Natural killer cell (primary cell): ENCODE measurements at regions of chr10 and their contacts with region 1.

Region 1: DNA sequence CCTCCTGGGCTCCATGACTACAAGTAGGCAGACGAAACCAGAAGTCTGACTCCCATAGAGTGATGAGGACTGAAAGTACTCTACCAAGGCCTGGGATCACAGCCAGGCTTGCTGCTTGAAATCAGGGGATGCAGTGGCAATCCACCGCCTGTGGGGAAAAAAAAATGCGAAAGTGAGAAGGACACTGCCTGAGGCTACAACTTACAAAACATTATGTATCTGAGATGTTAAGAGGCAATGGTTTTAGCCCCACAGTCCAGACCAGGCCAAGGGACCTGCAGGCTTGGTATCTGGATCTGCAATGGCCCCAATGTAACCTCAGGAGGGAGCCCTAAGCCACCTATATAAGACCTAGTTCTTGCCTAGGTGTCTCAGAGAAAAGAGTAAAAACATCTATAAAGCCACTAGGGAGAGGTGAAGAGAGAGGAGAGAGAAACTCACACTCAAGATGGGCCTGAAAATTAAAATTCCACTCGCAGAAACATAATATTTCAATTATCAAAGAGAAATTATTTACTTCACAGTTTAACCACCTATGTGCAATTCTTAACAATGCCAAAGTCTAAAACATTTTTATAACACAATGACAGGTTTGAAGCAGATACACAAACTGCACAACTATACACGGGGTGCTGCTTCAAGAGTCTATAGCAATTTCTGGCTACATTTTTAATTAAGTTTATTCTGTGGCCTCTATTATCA is 13.9 kb downstream of the DNAJC1 start:
- DNase-seq: peak in 1 of 2 donors; percentile 64
- ATAC-seq: peak; percentile 68 to 86 (median 85)
- H3K4me3 ChIP-seq: no peak overlapping the region
- H3K4me3 Mint-ChIP-seq: no peak overlapping the region
- H3K27ac ChIP-seq: no peak overlapping the region
- H3K27ac Mint-ChIP-seq: peak overlapping the region; percentile 23 to 76
- H3K4me1 ChIP-seq: no peaks in the 10 kb centered on the region
- H3K4me1 Mint-ChIP-seq: peaks cover 31 to 40% of the 10 kb centered on the region in 2 donors
- H3K27me3 ChIP-seq: no peaks in the 10 kb centered on the region
- H3K27me3 Mint-ChIP-seq: no peaks in the 10 kb centered on the region
- CTCF ChIP-seq: peak; percentile 43

Region 2: DNA sequence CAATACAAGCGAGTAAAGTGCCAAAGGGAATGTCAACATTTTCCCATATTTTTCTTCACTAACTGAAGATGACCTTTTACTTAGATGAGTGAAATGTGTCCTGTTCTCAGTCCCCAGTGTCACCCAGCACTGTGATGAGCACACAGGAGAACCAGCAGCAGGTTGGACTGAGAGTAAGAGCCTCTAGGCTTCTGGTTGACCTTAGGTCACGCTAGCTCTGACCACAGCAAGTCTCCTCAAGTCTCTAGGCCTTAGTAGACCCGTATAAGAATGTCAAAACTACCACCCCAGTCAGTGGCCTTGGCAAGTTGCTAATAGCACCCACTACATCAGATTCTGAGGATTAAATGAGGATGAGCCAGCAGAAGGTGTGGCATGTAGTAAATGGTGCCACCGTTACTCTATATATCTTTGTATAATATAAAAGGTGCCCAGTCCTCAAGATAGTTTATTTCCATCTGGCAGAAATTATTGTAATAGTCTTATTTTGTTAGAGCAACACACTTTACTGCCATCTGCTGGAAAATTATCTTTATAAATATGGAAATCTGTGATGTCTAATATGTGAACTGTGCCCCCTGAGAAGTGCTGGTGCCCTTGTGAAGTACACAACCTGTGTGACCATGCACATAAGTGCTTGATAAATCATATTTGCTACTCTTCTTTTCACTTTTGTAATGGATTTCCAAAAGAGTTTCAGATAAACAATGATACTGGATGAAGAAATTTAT is 431.3 kb after region 1 on chr10:
- intact Hi-C with region 1: loop called (anchors 5 kb)
- DNase-seq: peak in 1 of 2 donors; percentile 57
- ATAC-seq: peak in 1 of 3 donors; percentile 26
- H3K4me3 ChIP-seq: no peak overlapping the region
- H3K4me3 Mint-ChIP-seq: no peak overlapping the region
- H3K27ac ChIP-seq: no peak overlapping the region
- H3K27ac Mint-ChIP-seq: no peak overlapping the region
- H3K4me1 ChIP-seq: no peaks in the 10 kb centered on the region
- H3K4me1 Mint-ChIP-seq: peaks cover 0 to 8% of the 10 kb centered on the region in 2 donors
- H3K27me3 ChIP-seq: no peaks in the 10 kb centered on the region
- H3K27me3 Mint-ChIP-seq: no peaks in the 10 kb centered on the region
- CTCF ChIP-seq: peak; percentile 36

Region 3: GRCh38 chr10:22550732-22551131 is 561.1 kb after region 1 on chr10:
- intact Hi-C with region 1: loop called (anchors 1 kb)
- DNase-seq: peak; percentile 68 to 81
- ATAC-seq: peak in 2 of 3 donors; percentile 77 to 78
- H3K4me3 ChIP-seq: no peak overlapping the region
- H3K4me3 Mint-ChIP-seq: no peak overlapping the region
- H3K27ac ChIP-seq: no peak overlapping the region
- H3K27ac Mint-ChIP-seq: peak overlapping the region; percentile 73 to 87
- H3K4me1 ChIP-seq: peaks cover 6% of the 10 kb centered on the region
- H3K4me1 Mint-ChIP-seq: peaks cover 32 to 43% of the 10 kb centered on the region in 2 donors
- H3K27me3 ChIP-seq: no peaks in the 10 kb centered on the region
- H3K27me3 Mint-ChIP-seq: no peaks in the 10 kb centered on the region
- CTCF ChIP-seq: peak; percentile 75

Region 4: GRCh38 chr10:23067939-23068775 is 1078.6 kb after region 1 on chr10:
- intact Hi-C with region 1: loop called (anchors 2 kb)
- DNase-seq: peak; percentile 55 to 82
- ATAC-seq: peak; percentile 53 to 78 (median 75)
- H3K4me3 ChIP-seq: no peak overlapping the region
- H3K4me3 Mint-ChIP-seq: no peak overlapping the region
- H3K27ac ChIP-seq: no peak overlapping the region
- H3K27ac Mint-ChIP-seq: no peak overlapping the region
- H3K4me1 ChIP-seq: no peaks in the 10 kb centered on the region
- H3K4me1 Mint-ChIP-seq: peaks cover 0 to 6% of the 10 kb centered on the region in 2 donors
- H3K27me3 ChIP-seq: no peaks in the 10 kb centered on the region
- H3K27me3 Mint-ChIP-seq: peaks cover 11 to 14% of the 10 kb centered on the region in 2 donors
- CTCF ChIP-seq: peak; percentile 89